CD8-positive, alpha-beta T cell (primary cell): ENCODE measurements at regions of chr7 and their contacts with region 1.

Region 1: GRCh38 chr7:44858161-44858560 is 10.3 kb upstream of the H2AZ2 start:
- DNase-seq: no peak
- ATAC-seq: no peak
- H3K4me3 ChIP-seq: no peak overlapping the region
- H3K4me3 Mint-ChIP-seq: no peak overlapping the region
- H3K27ac ChIP-seq: no peak overlapping the region
- H3K27ac Mint-ChIP-seq: no peak overlapping the region
- H3K4me1 ChIP-seq: no peaks in the 10 kb centered on the region
- H3K4me1 Mint-ChIP-seq: peaks cover 5% of the 10 kb centered on the region
- H3K27me3 ChIP-seq: no peaks in the 10 kb centered on the region
- H3K27me3 Mint-ChIP-seq: no peaks in the 10 kb centered on the region
- CTCF ChIP-seq: peak; percentile 25

Region 2: GRCh38 chr7:44876393-44876792 is 18.2 kb after region 1 on chr7:
- CTCF ChIA-PET with region 1: interaction called, 43 read pairs
- POLR2A ChIA-PET with region 1: interaction called, 3 read pairs
- intact Hi-C with region 1: no loop called
- DNase-seq: no peak
- ATAC-seq: no peak
- H3K4me3 ChIP-seq: no peak overlapping the region
- H3K4me3 Mint-ChIP-seq: no peak overlapping the region
- H3K27ac ChIP-seq: no peak overlapping the region
- H3K27ac Mint-ChIP-seq: no peak overlapping the region
- H3K4me1 ChIP-seq: peaks cover 7% of the 10 kb centered on the region
- H3K4me1 Mint-ChIP-seq: peaks cover 27% of the 10 kb centered on the region
- H3K27me3 ChIP-seq: no peaks in the 10 kb centered on the region
- H3K27me3 Mint-ChIP-seq: no peaks in the 10 kb centered on the region
- CTCF ChIP-seq: no peak

Region 3: DNA sequence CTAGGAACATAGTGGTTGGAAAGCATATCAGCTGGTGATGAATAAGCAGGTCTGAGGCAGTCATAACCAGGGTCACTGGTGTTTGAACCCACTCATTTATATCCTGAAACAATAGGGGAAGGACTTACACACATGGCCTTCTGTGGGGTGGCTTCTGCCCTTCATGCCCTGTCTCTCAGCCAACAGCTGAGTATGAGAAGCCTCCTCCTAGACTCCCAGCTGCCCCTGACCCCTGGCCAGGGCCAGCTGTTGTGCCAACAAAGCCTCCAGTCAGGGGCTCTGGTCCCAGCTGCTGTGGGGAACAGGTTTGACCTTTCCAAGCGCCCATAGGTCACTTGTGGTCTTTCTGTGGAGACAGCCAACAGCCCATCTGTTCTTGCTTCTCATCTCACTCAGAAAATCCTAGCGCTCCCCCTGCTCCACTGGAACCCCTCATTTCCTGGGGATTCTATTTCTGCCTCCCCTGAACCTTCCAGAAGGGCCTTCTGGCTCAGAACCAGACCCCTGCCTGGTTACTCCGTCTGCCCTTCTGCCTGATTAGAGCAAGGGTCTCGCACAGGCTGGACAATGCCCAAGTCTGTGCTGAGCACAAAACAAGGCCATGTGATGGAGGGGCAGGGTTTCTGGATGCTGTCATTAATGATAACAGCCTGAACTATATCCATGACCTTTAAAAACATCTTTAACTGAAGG is 36.9 kb after region 1 on chr7:
- CTCF ChIA-PET with region 1: interaction called, 12 read pairs
- POLR2A ChIA-PET with region 1: interaction called, 5 read pairs
- intact Hi-C with region 1: no loop called
- DNase-seq: no peak
- ATAC-seq: no peak
- H3K4me3 ChIP-seq: no peak overlapping the region
- H3K4me3 Mint-ChIP-seq: no peak overlapping the region
- H3K27ac ChIP-seq: no peak overlapping the region
- H3K27ac Mint-ChIP-seq: no peak overlapping the region
- H3K4me1 ChIP-seq: peaks cover 22% of the 10 kb centered on the region
- H3K4me1 Mint-ChIP-seq: peaks cover 32% of the 10 kb centered on the region
- H3K27me3 ChIP-seq: no peaks in the 10 kb centered on the region
- H3K27me3 Mint-ChIP-seq: no peaks in the 10 kb centered on the region
- CTCF ChIP-seq: no peak

Region 4: DNA sequence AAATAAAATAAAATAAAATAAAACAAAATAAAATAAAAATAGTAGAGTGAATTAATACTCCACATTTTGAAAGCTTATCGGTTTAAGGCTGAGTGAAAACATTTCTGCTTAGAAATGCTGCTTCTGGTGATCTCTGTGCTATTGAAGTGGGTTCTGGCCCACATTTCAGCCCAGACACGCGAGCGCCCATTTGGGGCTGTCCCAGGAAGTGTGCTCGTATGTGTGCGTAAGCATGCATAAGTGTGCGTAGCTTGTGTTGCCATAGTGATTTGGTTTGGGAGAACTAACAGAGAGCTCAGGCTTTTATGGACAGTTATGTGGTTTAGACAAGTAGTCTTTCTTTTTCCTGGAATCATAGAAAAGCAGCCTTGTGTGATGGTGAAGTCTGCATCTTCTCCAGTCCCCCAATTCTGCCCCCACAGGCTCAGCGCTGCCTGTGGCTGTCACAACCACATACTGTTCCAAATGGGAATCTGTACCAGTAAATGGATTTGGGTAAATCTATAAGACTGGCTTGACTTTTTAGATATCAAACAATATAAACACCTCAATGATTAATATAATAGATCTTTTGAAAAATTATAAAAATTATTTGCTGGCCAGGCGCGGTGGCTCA is 56.9 kb after region 1 on chr7:
- CTCF ChIA-PET with region 1: interaction called, 191 read pairs
- POLR2A ChIA-PET with region 1: no interaction called
- intact Hi-C with region 1: no loop called
- DNase-seq: peak; percentile 25 to 92 (median 54)
- ATAC-seq: peak; percentile 92
- H3K4me3 ChIP-seq: no peak overlapping the region
- H3K4me3 Mint-ChIP-seq: no peak overlapping the region
- H3K27ac ChIP-seq: peak overlapping the region in 1 of 2 experiments; percentile 41
- H3K27ac Mint-ChIP-seq: peak overlapping the region; percentile 87
- H3K4me1 ChIP-seq: no peaks in the 10 kb centered on the region
- H3K4me1 Mint-ChIP-seq: peaks cover 4% of the 10 kb centered on the region
- H3K27me3 ChIP-seq: no peaks in the 10 kb centered on the region
- H3K27me3 Mint-ChIP-seq: no peaks in the 10 kb centered on the region
- CTCF ChIP-seq: no peak